CD4-positive, alpha-beta memory T cell (primary cell): ENCODE measurements at regions of chr1 and their contacts with region 1.

Region 1: DNA sequence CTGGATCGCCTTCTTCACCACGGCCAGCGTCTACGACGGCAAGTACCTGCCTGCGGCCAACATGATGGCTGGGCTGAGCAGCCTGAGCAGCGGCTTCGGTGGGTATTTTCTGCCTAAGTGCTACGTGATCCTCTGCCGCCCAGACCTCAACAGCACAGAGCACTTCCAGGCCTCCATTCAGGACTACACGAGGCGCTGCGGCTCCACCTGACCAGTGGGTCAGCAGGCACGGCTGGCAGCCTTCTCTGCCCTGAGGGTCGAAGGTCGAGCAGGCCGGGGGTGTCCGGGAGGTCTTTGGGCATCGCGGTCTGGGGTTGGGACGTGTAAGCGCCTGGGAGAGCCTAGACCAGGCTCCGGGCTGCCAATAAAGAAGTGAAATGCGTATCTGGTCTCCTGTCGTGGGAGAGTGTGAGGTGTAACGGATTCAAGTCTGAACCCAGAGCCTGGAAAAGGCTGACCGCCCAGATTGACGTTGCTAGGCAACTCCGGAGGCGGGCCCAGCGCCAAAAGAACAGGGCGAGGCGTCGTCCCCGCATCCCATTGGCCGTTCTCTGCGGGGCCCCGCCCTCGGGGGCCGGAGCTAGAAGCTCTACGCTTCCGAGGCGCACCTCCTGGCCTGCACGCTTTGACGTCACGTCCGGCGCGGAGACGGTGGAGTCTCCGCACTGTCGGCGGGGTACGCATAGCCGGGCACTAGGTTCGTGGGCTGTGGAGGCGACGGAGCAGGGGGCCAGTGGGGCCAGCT is at the start of gene ZBTB48:
- DNase-seq: peak; percentile 95 to 97 (median 95)
- H3K4me3 ChIP-seq: peak within 1 kb of the TSS; percentile 69 to 76
- H3K4me3 Mint-ChIP-seq: peak within 1 kb of the TSS; percentile 92 to 99 (median 96)
- H3K27ac ChIP-seq: peak within 1 kb of the TSS; percentile 83
- H3K27ac Mint-ChIP-seq: peak within 1 kb of the TSS; percentile 96 to 99 (median 99)
- H3K4me1 ChIP-seq: peaks cover 32% of the 10 kb centered on the region
- H3K4me1 Mint-ChIP-seq: peaks cover 19 to 42% (median 30%) of the 10 kb centered on the region in 4 donors
- H3K27me3 ChIP-seq: no peaks in the 10 kb centered on the region
- H3K27me3 Mint-ChIP-seq: no peaks in the 10 kb centered on the region
- total RNA-seq, gene ZBTB48: 62.6 to 70.7 TPM

Region 2: DNA sequence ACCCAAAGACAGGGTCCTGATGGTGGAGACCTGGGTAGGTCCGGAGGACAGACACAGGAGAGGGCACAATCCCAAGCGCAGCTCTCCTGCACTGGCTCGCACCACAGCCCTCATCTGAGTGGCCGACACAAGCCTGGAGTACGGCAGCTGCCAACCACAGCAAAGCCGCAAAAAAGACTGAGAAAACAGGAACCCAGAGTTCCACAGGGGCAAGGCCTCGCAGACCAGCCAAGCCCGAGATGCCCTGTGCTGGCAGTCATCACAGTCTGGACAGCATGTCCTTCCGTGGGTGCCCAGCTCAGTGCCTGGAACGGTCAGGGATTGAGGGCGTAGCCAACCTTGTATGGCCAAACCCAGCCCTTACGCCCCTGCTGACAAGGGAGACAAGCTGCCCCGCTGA is 11.7 kb after region 1 on chr1:
- CTCF ChIA-PET with region 1: interaction called, 3 read pairs
- POLR2A ChIA-PET with region 1: interaction called, 273 read pairs
- intact Hi-C with region 1: no loop called
- DNase-seq: no peak
- H3K4me3 ChIP-seq: no peak overlapping the region
- H3K4me3 Mint-ChIP-seq: peak overlapping the region in 2 of 8 donors; percentile 13 to 31
- H3K27ac ChIP-seq: no peak overlapping the region
- H3K27ac Mint-ChIP-seq: peak overlapping the region in 5 of 7 donors; percentile 31 to 72 (median 36)
- H3K4me1 ChIP-seq: peaks cover 26% of the 10 kb centered on the region
- H3K4me1 Mint-ChIP-seq: peaks cover 7 to 45% (median 23%) of the 10 kb centered on the region in 4 donors
- H3K27me3 ChIP-seq: no peaks in the 10 kb centered on the region
- H3K27me3 Mint-ChIP-seq: no peaks in the 10 kb centered on the region

Region 3: GRCh38 chr1:6613361-6614018 is 33.9 kb after region 1 on chr1 and contains the start of gene PHF13:
- CTCF ChIA-PET with region 1: no interaction called
- POLR2A ChIA-PET with region 1: interaction called, 8 read pairs
- intact Hi-C with region 1: loop called (anchors 1 kb)
- DNase-seq: peak; percentile 98 to 99 (median 99)
- H3K4me3 ChIP-seq: peak within 1 kb of the TSS; percentile 20 to 46
- H3K4me3 Mint-ChIP-seq: peak within 1 kb of the TSS; percentile 91 to 97 (median 93)
- H3K27ac ChIP-seq: peak within 1 kb of the TSS; percentile 65
- H3K27ac Mint-ChIP-seq: peak within 1 kb of the TSS; percentile 86 to 94 (median 92)
- H3K4me1 ChIP-seq: peaks cover 23% of the 10 kb centered on the region
- H3K4me1 Mint-ChIP-seq: peaks cover 15 to 31% (median 25%) of the 10 kb centered on the region in 4 donors
- H3K27me3 ChIP-seq: no peaks in the 10 kb centered on the region
- H3K27me3 Mint-ChIP-seq: no peaks in the 10 kb centered on the region
- total RNA-seq, gene PHF13: 13.1 to 14.7 TPM

Region 4: GRCh38 chr1:6624710-6625583 is 45.4 kb after region 1 on chr1 and contains the start of gene THAP3:
- CTCF ChIA-PET with region 1: interaction called, 8 read pairs
- POLR2A ChIA-PET with region 1: interaction called, 14 read pairs
- intact Hi-C with region 1: loop called (anchors 1 kb)
- DNase-seq: peak; percentile 84 to 91 (median 86)
- H3K4me3 ChIP-seq: peak within 1 kb of the TSS; percentile 63 to 73
- H3K4me3 Mint-ChIP-seq: peak within 1 kb of the TSS; percentile 90 to 95 (median 94)
- H3K27ac ChIP-seq: peak within 1 kb of the TSS; percentile 60
- H3K27ac Mint-ChIP-seq: peak within 1 kb of the TSS; percentile 78 to 93 (median 90)
- H3K4me1 ChIP-seq: peaks cover 23% of the 10 kb centered on the region
- H3K4me1 Mint-ChIP-seq: peaks cover 15 to 35% (median 28%) of the 10 kb centered on the region in 4 donors
- H3K27me3 ChIP-seq: no peaks in the 10 kb centered on the region
- H3K27me3 Mint-ChIP-seq: no peaks in the 10 kb centered on the region
- total RNA-seq, gene THAP3: 29.5 to 34.5 TPM

Region 5: DNA sequence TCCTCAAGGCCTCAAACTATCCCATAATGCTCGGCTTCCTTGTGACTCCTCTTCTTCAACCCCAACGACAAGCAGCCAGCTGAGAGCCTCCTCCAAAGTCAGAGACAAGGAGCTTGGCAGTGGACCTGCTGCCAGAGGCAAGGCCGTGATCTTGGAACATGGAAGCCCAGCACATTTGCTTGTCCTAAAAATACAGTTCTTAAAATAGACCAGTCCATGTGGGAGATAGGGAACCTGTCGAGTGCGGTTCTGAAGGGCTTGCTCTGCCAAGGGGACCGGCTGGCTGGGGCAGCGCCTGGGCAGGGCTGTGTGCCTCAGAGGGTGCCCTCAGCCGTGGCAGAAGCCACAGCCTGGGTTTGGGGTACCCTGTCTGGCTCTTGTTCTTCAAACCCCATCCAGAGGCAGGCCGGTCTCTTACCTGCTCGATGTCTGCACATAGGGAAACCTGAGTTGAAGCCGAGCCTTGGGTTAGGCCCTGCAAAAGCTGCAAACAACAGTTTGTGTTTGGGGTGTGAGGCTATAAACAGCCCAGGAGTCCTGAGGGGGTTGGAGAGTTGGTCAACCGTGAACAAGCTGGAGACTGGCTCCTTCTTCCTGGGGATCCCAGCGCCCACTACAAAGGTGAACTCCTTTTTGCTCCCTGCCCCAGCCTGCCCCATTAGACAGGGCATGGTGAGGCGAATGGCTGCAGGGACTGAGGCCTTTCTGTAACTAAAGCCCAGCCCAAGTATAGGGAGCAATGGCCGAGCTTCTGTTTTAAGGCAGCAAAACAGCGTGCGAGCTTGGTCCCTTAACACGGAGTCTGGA is 434.5 kb after region 1 on chr1:
- CTCF ChIA-PET with region 1: no interaction called
- POLR2A ChIA-PET with region 1: no interaction called
- intact Hi-C with region 1: no loop called
- DNase-seq: no peak
- H3K4me3 ChIP-seq: no peak overlapping the region
- H3K4me3 Mint-ChIP-seq: no peak overlapping the region
- H3K27ac ChIP-seq: no peak overlapping the region
- H3K27ac Mint-ChIP-seq: no peak overlapping the region
- H3K4me1 ChIP-seq: no peaks in the 10 kb centered on the region
- H3K4me1 Mint-ChIP-seq: no peaks in the 10 kb centered on the region
- H3K27me3 ChIP-seq: no peaks in the 10 kb centered on the region
- H3K27me3 Mint-ChIP-seq: peaks cover 6 to 8% of the 10 kb centered on the region in 2 donors